Activated naive CD4-positive, alpha-beta T cell treated with anti-CD3 and anti-CD28 coated beads for 36 hours (primary cell): ENCODE measurements at regions of chr9 and their contacts with region 1.

Region 1: DNA sequence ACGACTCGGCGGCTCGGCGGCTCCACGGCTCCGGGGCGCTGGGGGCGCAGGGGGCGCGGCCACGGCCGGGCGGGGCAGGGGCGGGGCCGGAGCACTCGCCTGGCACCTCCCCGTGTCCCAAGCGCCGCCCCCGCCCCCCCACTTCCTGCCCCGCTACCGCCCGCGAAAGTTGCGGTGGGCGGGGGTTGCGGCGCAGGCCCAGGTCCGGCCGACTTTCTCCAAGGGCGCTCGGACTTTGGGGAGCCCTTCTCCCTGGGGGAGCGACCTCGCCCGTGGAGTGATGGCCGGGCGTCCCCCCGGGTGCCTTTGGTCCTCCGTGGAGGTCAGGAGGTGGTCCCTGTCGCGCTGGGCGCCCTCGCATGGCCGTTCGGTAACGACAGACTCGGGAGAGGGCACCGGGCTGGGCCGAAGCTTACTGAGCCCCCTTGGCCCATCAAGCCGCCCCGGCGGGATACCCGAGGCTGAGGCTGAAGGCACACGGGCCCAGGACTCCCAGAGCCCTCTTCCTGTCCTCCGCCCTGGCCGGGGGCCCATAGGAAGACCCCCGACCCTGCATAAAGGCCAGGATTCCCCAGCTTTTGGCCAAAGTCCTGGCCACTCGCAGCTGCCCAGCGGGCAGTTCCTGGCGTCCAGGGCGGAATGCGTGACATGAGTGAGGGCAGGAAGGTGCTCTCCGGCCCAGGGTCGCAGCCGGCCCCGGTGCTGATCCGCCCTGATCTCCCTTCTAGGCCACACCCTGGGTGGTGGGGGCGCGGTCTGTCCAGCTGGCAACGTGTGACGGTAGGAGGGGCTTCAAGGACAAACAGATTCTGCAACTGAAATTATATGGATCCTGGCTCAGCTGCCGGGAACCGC is 883 bp upstream of the VAV2 start:
- DNase-seq: peak; percentile 74
- H3K4me3 Mint-ChIP-seq: peak overlapping the region; percentile 60
- H3K27ac Mint-ChIP-seq: no peak overlapping the region
- H3K4me1 Mint-ChIP-seq: peaks cover 2% of the 10 kb centered on the region
- H3K27me3 Mint-ChIP-seq: peaks cover 3% of the 10 kb centered on the region

Region 2: DNA sequence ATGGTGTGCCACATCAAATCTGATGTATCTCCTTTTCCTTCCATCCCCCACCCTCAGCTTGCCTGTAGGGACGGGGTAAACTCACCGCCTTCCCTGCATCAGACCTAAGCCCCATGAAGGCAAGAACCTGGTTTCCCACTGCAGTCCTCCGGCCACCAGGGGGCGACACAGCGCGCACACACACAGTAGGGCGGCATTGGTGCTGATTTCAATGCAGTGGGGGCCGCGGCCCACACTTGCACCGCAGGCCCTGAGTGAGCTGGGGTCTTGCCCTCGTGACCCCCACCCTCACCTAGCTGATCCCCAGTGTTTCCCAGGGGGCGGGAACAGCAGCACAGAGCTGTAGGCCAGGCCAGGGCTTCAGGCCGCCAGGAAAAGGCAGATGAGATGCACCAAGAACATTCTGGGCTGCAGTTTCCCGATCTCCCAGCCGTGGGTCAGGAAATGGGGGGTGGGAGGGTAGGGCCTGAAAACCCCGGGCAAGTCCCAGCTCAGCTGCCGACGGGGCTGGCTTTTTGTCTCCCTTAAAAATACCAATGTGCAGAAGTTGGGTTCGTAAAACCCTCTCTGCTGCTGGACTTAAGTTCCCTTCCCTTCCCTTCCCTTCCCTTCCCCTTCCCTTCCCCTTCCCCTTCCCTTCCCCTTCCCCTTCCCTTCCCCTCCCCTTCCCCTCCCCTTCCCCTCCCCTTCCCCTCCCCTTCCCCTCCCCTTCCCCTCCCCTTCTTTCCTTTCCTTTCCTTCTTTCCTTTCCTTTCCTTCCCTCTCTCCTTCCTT is 403.4 kb before region 1 on chr9:
- CTCF ChIA-PET with region 1: interaction called, 3 read pairs
- intact Hi-C with region 1: loop called (anchors 10 kb)
- DNase-seq: peak; percentile 63
- H3K4me3 Mint-ChIP-seq: no peak overlapping the region
- H3K27ac Mint-ChIP-seq: no peak overlapping the region
- H3K4me1 Mint-ChIP-seq: peaks cover 6% of the 10 kb centered on the region
- H3K27me3 Mint-ChIP-seq: peaks cover 9% of the 10 kb centered on the region

Region 3: DNA sequence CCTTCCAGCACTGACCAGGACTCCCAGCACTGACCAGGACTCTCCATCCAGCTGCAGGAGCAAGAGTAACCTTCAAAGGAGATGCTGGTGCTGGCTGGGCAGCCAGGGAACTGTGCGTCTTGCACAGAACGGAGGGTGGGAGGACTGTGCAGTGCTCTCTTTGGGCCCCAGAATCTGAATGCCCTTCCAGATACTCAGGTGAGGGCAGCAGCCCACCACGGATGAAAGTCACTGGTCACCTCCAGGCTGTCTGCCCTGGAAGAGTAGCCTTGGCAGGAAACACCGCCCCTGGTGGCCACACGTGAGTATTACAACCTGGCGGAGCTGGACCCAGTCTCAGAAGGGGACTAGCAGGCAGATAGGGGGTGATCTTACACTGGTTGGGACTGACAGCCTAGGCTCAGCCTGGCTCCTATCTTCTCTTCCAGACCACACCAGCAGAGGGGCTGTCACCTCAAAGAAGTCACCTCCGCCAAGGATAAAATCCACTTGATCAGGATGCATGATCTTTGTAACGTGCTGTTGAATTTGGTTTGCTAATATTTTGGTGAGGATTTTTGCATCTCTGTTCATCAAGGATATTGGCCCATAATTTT is 250.1 kb before region 1 on chr9:
- CTCF ChIA-PET with region 1: no interaction called
- intact Hi-C with region 1: loop called (anchors 1 kb)
- DNase-seq: peak; percentile 83
- H3K4me3 Mint-ChIP-seq: no peak overlapping the region
- H3K27ac Mint-ChIP-seq: no peak overlapping the region
- H3K4me1 Mint-ChIP-seq: peaks cover 2% of the 10 kb centered on the region
- H3K27me3 Mint-ChIP-seq: peaks cover 2% of the 10 kb centered on the region

Region 4: DNA sequence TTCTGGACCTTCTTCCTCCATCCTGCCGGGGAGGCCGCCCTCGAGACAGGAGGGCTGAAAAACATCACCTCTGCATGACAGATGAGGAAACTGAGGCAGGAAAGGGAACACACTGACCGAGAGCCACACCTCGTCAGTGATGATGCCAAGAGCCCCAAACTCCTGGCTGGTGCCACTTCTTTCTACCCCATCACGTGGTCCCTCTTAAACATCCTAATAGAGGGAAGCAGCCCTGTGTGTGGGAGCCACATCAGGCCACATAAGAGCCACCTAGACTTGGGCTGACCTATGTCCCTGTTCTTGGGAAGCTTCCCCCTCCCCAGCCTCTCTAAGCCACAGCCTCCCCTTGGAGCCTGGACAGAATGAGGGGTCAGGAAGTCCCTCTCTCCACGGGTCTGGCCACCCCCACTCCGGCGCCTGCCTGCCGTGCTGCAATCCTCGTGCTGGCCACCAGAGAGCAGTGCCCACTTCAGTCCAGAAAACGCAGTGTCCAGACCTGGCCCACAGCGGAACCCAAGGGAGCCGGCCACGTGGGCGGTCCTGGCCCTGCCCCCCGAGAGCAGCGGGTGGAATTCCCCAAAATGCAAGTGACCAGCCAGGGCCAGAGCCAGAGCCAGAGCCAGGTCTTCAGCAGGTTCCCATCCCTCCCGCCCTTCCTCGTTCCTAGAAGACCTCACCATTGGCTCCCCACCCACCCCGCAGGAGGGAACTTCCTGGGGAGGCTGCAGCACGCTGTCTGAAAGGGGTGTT is 200.1 kb before region 1 on chr9:
- CTCF ChIA-PET with region 1: interaction called, 61 read pairs
- intact Hi-C with region 1: loop called (anchors 1 kb)
- DNase-seq: peak; percentile 63
- H3K4me3 Mint-ChIP-seq: no peak overlapping the region
- H3K27ac Mint-ChIP-seq: no peak overlapping the region
- H3K4me1 Mint-ChIP-seq: peaks cover 2% of the 10 kb centered on the region
- H3K27me3 Mint-ChIP-seq: peaks cover 2% of the 10 kb centered on the region

Region 5: DNA sequence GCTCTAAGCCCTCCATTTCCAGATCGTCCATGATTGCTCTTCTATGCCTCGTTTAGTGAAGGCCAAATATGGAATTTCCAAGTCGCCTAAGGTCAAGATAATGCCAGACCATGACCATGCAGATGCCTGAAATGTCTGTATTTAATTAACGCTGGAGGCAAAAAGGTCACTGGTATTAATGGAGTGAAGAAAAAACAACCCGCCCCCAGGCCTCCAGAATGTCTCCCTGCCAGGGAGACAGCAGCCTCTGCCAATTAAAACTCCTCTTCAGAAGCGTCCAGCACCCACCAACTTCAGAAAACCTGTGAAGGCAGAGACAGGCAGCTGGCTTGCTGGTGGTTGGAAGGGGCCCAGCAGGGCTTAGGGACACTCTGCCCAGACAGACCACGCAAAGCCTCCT is 95.4 kb before region 1 on chr9:
- CTCF ChIA-PET with region 1: no interaction called
- intact Hi-C with region 1: no loop called
- DNase-seq: no peak
- H3K4me3 Mint-ChIP-seq: no peak overlapping the region
- H3K27ac Mint-ChIP-seq: no peak overlapping the region
- H3K4me1 Mint-ChIP-seq: no peaks in the 10 kb centered on the region
- H3K27me3 Mint-ChIP-seq: no peaks in the 10 kb centered on the region

Region 6: DNA sequence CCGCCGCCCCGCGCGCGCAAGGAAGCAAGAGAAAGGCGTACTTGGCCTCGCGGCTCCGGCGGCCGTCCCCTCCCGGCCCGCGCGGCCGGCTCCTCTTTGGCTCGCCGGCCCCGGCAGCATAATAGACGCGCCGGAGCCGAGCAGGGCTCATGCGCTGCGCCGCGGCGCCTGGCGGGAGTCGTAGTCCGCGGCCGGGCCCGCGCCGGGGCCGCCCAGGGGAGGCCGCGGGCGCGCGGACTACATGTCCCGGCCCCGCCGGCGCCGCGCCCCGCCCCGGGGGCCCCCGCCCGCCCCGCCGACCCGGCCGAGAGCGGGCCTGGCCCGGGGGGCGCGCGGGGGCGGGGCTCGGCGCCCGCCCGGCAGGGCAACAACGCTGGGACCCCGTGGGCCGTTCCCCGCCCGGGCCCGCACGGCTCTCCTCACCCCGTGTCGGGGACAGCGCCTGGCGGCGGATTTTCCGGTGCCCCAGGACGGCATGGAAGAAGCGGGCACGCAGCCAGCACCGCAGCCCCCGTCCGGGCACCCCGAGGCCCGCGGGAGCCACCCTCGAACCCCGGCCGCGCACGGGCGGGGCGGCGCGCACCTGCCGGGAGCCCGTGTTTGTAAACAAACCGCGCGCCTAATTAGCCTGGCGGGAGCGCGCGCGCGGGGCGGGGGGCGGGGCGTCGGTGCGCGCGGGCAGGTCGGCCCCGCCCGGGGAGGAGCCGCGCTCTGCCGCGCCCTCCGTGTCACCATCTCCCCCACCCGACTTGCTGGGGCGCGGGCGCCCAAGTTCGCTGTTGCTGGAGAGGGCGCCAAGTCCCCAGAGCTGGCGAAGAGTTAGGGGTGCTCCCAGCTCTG is 75.1 kb after region 1 on chr9 and contains the start of gene BRD3:
- CTCF ChIA-PET with region 1: interaction called, 4 read pairs
- intact Hi-C with region 1: loop called (anchors 1 kb)
- DNase-seq: peak; percentile 80
- H3K4me3 Mint-ChIP-seq: peak within 1 kb of the TSS; percentile 87
- H3K27ac Mint-ChIP-seq: peak within 1 kb of the TSS; percentile 80
- H3K4me1 Mint-ChIP-seq: peaks cover 29% of the 10 kb centered on the region
- H3K27me3 Mint-ChIP-seq: peaks cover 13% of the 10 kb centered on the region
- total RNA-seq, gene BRD3: 34.2 to 36.6 TPM